ENCODE measurements at regions of chr18 and their contacts with region 1.

Region 1: GRCh38 chr18:939167-939566 is 34.5 kb downstream of the ADCYAP1 start:
- DNase-seq: no peak
- H3K4me3 ChIP-seq: no peak overlapping the region
- H3K27ac ChIP-seq: no peak overlapping the region
- H3K4me1 ChIP-seq: no peaks in the 10 kb centered on the region
- H3K27me3 ChIP-seq: no peaks in the 10 kb centered on the region
- CTCF ChIP-seq: no peak

Region 2: DNA sequence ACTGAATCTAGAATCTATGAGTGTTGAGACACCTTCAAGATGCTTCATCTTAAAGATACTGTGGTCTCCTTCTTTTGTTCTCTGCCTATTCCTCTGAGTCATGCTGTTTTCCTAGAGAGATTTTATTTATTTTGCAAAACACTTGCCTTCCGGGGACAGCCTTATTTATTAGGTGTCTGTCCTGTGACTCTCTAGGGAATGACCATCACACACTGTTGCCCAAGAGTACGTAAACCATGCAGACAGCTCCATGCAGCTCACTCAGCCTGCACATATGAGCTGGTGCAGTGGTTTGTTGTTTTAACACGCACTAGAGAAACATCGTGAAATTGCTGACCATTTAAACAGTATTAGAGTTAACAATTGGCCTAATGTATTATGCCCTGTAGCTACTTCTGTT is 46.9 kb before region 1 on chr18:
- intact Hi-C with region 1: no loop called
- DNase-seq: no peak
- H3K4me3 ChIP-seq: no peak overlapping the region
- H3K27ac ChIP-seq: no peak overlapping the region
- H3K4me1 ChIP-seq: no peaks in the 10 kb centered on the region
- H3K27me3 ChIP-seq: no peaks in the 10 kb centered on the region
- CTCF ChIP-seq: no peak

Region 3: DNA sequence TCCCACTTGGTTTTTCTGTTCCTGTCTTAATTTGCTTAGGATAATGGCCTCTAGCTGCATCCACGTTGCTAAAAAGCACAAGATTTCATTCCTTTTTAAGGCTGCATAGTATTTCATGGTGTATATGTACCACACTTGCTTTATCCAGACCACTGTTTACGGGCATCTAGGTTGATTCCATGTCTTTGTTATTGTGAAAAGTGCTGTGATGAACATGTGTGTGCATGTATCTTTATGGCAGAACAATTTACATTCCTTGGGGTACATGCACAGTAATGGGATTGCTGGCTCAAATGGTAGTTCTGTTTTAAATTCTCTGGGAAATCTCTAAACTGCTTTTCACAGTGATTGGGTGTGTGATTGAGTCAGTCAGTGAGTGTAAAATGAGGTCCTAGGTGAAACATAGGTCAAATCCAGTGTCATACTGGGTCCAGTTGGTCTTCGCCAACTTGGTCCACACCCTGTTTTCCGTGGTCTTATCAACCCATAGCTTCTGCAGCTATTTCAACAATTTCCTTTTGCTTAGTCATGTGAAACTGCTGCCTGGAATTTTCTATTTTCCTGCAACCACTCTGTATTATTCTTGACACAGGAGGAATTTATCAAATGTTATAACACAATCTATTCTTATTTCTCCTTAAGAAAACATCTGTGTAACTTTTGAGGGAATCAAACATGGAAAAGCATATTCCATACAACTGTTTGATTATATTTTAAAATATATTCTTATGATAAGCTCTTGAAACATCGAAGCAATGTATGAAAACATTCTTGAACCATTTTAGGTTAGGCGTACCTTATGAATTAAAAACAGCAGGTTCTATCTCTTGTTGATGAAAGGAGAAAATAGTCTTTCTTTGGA is 48.4 kb after region 1 on chr18:
- intact Hi-C with region 1: loop called (anchors 5 kb)
- DNase-seq: no peak
- H3K4me3 ChIP-seq: no peak overlapping the region
- H3K27ac ChIP-seq: no peak overlapping the region
- H3K4me1 ChIP-seq: no peaks in the 10 kb centered on the region
- H3K27me3 ChIP-seq: no peaks in the 10 kb centered on the region
- CTCF ChIP-seq: no peak

Region 4: DNA sequence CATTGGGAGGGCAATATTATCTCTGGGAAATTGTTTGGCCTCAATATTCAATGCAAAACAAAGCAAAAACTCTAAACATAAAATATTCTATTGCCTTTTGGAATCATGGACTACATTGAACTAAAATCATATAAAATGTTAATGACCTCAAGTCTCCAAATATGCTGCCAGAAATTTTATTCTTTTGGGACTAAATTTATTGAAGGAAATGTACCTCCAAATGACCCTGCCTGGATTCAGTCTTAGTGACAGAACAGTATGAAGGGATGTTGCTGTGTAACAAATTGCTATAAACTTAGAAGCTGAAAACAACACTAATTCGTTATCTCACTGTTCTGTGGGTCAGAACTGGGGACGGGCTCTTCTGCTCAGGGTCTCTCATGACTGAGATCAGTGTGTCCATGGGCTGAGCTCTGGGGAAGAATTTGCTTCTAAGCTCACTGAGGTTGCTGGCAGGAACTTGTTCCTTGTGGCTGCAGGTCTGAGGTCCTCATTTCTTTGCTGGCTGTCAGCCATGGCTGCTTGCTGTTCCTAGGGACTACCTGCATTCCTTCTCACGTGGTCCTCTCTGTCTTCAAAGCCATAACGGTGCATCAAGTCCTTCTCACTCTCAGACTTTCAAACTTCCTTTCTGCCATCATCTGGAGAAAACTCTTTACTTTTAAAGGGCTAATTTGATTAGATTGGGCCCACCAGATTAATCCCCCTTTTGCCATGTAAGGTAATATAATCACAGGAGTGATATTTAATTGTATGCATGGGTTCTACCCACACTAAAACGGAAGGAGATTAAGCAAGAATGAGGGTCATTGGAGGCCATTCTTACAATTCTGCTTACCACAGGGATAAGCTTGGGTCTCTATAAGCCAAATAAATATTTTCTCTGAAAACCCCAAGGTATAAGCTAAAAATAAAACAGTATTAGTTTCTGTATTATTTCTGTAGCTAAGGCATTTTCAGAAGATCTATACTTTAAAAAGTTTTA is 114.5 kb after region 1 on chr18:
- intact Hi-C with region 1: no loop called
- DNase-seq: no peak
- H3K4me3 ChIP-seq: no peak overlapping the region
- H3K27ac ChIP-seq: no peak overlapping the region
- H3K4me1 ChIP-seq: no peaks in the 10 kb centered on the region
- H3K27me3 ChIP-seq: no peaks in the 10 kb centered on the region
- CTCF ChIP-seq: no peak